ENCODE measurements at regions of chr19 and their contacts with region 1.

Region 1: DNA sequence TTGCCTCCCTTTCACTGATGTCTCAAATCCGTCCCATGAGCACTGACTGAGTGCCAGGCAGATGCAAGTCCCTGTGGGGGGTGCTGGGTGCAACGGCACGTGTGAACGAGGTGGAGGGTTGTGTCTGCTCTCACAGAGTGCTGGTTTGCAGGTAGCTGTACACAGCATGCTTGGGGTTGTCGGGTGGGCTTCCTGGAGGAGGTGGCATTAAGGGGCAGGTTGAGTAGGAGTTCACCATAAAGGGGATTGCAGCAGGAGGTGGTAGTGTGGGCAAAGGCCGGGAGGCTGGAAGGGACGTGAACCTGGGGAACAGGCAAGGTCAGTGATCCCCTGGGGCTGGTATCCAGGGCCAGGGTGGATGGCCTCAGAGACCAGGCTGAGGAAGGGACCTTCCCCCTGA is 17.2 kb downstream of the COLGALT1 start:
- DNase-seq: no peak
- H3K4me3 Mint-ChIP-seq: no peak overlapping the region
- H3K27ac Mint-ChIP-seq: no peak overlapping the region
- H3K4me1 Mint-ChIP-seq: no peaks in the 10 kb centered on the region
- H3K27me3 Mint-ChIP-seq: no peaks in the 10 kb centered on the region
- CTCF ChIP-seq: no peak

Region 2: GRCh38 chr19:17448131-17448967 is 124.3 kb before region 1 on chr19 and contains the start of gene TMEM221:
- CTCF ChIA-PET with region 1: no interaction called
- POLR2A ChIA-PET with region 1: no interaction called
- intact Hi-C with region 1: no loop called
- DNase-seq: no peak
- H3K4me3 Mint-ChIP-seq: no peak within 1 kb of the TSS
- H3K27ac Mint-ChIP-seq: no peak within 1 kb of the TSS
- H3K4me1 Mint-ChIP-seq: peaks cover 5% of the 10 kb centered on the region
- H3K27me3 Mint-ChIP-seq: no peaks in the 10 kb centered on the region
- CTCF ChIP-seq: peak; percentile 14
- total RNA-seq, gene TMEM221: not detected in 2 replicates

Region 3: GRCh38 chr19:17555480-17555928 is 17.1 kb before region 1 on chr19 and contains the start of gene COLGALT1:
- CTCF ChIA-PET with region 1: interaction called, 13 read pairs
- POLR2A ChIA-PET with region 1: interaction called, 3 read pairs
- intact Hi-C with region 1: no loop called
- DNase-seq: peak; percentile 99
- H3K4me3 Mint-ChIP-seq: peak within 1 kb of the TSS; percentile 86
- H3K27ac Mint-ChIP-seq: peak within 1 kb of the TSS; percentile 67
- H3K4me1 Mint-ChIP-seq: peaks cover 20% of the 10 kb centered on the region
- H3K27me3 Mint-ChIP-seq: no peaks in the 10 kb centered on the region
- CTCF ChIP-seq: no peak
- total RNA-seq, gene COLGALT1: 103 and 107 TPM in 2 replicates

Region 4: DNA sequence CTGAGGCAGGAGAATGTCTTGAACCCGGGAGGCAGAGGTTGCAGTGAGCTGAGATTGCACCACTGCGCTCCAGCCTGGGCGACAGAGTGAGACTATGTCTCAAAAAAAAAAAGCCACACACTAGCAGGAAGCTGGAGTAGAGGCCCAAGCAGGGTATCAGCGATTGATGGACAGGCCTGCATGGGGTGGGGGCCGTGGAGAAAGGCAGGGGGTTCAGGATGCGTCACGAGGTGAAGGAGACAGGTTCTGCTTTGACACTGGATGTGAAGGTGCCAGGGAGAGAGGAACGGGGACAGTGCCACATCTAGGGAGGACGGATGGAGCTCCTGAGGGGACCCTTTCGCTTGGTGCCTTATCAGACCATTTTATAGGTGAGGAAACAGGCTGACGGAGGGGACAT is 10.1 kb before region 1 on chr19:
- CTCF ChIA-PET with region 1: interaction called, 18 read pairs
- POLR2A ChIA-PET with region 1: interaction called, 3 read pairs
- intact Hi-C with region 1: no loop called
- DNase-seq: no peak
- H3K4me3 Mint-ChIP-seq: no peak overlapping the region
- H3K27ac Mint-ChIP-seq: peak overlapping the region; percentile 51
- H3K4me1 Mint-ChIP-seq: peaks cover 8% of the 10 kb centered on the region
- H3K27me3 Mint-ChIP-seq: no peaks in the 10 kb centered on the region
- CTCF ChIP-seq: no peak

Region 5: GRCh38 chr19:17611462-17612244 is 39.0 kb after region 1 on chr19:
- CTCF ChIA-PET with region 1: no interaction called
- POLR2A ChIA-PET with region 1: no interaction called
- intact Hi-C with region 1: no loop called
- DNase-seq: no peak
- H3K4me3 Mint-ChIP-seq: no peak overlapping the region
- H3K27ac Mint-ChIP-seq: no peak overlapping the region
- H3K4me1 Mint-ChIP-seq: no peaks in the 10 kb centered on the region
- H3K27me3 Mint-ChIP-seq: peaks cover 13% of the 10 kb centered on the region
- CTCF ChIP-seq: no peak

Measured in MCF 10A (cell line).